ENCODE measurements at regions of chr6 and their contacts with region 1.

Region 1: GRCh38 chr6:89242574-89243330 is 25.6 kb upstream of the GABRR1 start:
- DNase-seq: no peak
- ATAC-seq: no peak

Region 2: GRCh38 chr6:89122625-89123024 is 120.1 kb before region 1 on chr6:
- intact Hi-C with region 1: loop called (anchors 2 kb)
- DNase-seq: no peak
- ATAC-seq: peak; percentile 48

Measured in Right ventricle myocardium inferior (tissue), 1 donor.